Natural killer cell (primary cell): ENCODE measurements at regions of chr10 and their contacts with region 1.

Region 1: GRCh38 chr10:91163869-91164474 is 56.5 kb upstream of the PCGF5 start:
- DNase-seq: peak; percentile 78 to 81
- ATAC-seq: peak; percentile 39 to 61 (median 57)
- H3K4me3 ChIP-seq: peak overlapping the region; percentile 69
- H3K4me3 Mint-ChIP-seq: peak overlapping the region; percentile 97
- H3K27ac ChIP-seq: peak overlapping the region; percentile 96
- H3K27ac Mint-ChIP-seq: peak overlapping the region; percentile 90 to 98
- H3K4me1 ChIP-seq: peaks cover 17% of the 10 kb centered on the region
- H3K4me1 Mint-ChIP-seq: peaks cover 36 to 43% of the 10 kb centered on the region in 2 donors
- H3K27me3 ChIP-seq: no peaks in the 10 kb centered on the region
- H3K27me3 Mint-ChIP-seq: peaks cover 0 to 5% of the 10 kb centered on the region in 2 donors
- CTCF ChIP-seq: no peak

Region 2: GRCh38 chr10:91198781-91199180 is 34.8 kb after region 1 on chr10:
- intact Hi-C with region 1: loop called (anchors 1 kb)
- DNase-seq: peak in 1 of 2 donors; percentile 62
- ATAC-seq: peak; percentile 65 to 81 (median 79)
- H3K4me3 ChIP-seq: no peak overlapping the region
- H3K4me3 Mint-ChIP-seq: peak overlapping the region; percentile 43
- H3K27ac ChIP-seq: peak overlapping the region; percentile 86
- H3K27ac Mint-ChIP-seq: peak overlapping the region; percentile 86
- H3K4me1 ChIP-seq: peaks cover 34% of the 10 kb centered on the region
- H3K4me1 Mint-ChIP-seq: peaks cover 62 to 67% of the 10 kb centered on the region in 2 donors
- H3K27me3 ChIP-seq: no peaks in the 10 kb centered on the region
- H3K27me3 Mint-ChIP-seq: no peaks in the 10 kb centered on the region
- CTCF ChIP-seq: no peak